Calu3 (cell line): ENCODE measurements at regions of chr4 and their contacts with region 1.

Region 1: GRCh38 chr4:185203486-185204237 is at the start of gene CFAP97:
- DNase-seq: peak; percentile 59
- H3K4me3 Mint-ChIP-seq: peak within 1 kb of the TSS; percentile 81
- H3K27ac Mint-ChIP-seq: peak within 1 kb of the TSS; percentile 92
- H3K4me1 Mint-ChIP-seq: peaks cover 17% of the 10 kb centered on the region
- H3K27me3 Mint-ChIP-seq: no peaks in the 10 kb centered on the region
- CTCF ChIP-seq: no peak
- total RNA-seq, gene CFAP97: 36.9 and 38.4 TPM in 2 replicates

Region 2: DNA sequence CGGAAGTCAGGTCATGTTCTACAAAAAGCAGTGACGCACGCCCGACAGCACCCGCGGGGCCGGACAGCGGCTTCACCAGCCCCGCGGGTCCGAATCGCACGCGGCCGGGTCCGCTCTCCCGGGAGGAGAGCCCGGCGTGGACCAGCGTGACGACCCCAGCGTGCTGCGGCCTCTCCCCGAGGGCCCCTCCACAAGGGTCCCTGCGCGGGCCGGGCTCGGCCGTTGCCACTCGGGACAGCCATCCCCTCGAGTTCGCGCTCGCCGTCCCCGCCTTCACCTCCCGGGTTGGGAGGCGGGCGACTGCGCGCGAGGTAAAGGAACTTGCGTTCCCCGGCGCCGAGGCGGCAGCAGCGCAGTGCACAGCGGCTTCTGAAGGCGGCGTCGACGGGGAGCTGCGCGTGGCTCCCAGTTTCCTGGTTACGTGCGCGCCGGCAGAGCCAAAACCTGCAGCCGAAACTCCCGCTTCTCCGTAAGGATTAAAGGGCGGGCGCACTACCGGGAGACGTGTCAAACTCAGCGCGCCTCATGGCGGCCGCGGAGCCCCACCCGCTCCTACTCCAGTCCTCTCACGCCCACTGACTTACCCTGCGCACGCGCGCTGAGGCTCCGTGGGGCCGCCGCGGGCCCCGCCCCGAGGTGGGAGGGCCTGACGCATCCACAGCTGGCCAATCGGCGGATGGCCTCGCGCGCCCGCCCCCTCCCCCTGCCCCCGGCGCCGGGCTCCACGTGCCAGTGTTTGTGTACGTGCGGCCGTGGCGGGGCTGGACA is 192.5 kb after region 1 on chr4:
- CTCF ChIA-PET with region 1: no interaction called
- intact Hi-C with region 1: loop called (anchors 5 kb)
- DNase-seq: peak; percentile 95
- H3K4me3 Mint-ChIP-seq: peak overlapping the region; percentile 72
- H3K27ac Mint-ChIP-seq: peak overlapping the region; percentile 93
- H3K4me1 Mint-ChIP-seq: peaks cover 8% of the 10 kb centered on the region
- H3K27me3 Mint-ChIP-seq: no peaks in the 10 kb centered on the region
- CTCF ChIP-seq: no peak